Activated T-helper 1 cell treated with anti-CD3 and anti-CD28 coated beads, Interleukin-12 subunit alpha, Interleukin-12 subunit beta, Interleukin-2, Interleukin-4 antibody, amounts not matched to agents 30 ng/mL and 10 ng/mL and 1 ng/mL, durations not matched to agents 14 hours and 24 hours and 36 hours (primary cell): ENCODE measurements at regions of chr6 and their contacts with region 1.

Region 1: GRCh38 chr6:13427801-13428582 is 59.4 kb downstream of the GFOD1 start:
- DNase-seq: peak; percentile 57
- H3K4me3 Mint-ChIP-seq: peak overlapping the region; percentile 54
- H3K27ac Mint-ChIP-seq: peak overlapping the region; percentile 95
- H3K4me1 Mint-ChIP-seq: peaks cover 78% of the 10 kb centered on the region
- H3K27me3 Mint-ChIP-seq: no peaks in the 10 kb centered on the region

Region 2: DNA sequence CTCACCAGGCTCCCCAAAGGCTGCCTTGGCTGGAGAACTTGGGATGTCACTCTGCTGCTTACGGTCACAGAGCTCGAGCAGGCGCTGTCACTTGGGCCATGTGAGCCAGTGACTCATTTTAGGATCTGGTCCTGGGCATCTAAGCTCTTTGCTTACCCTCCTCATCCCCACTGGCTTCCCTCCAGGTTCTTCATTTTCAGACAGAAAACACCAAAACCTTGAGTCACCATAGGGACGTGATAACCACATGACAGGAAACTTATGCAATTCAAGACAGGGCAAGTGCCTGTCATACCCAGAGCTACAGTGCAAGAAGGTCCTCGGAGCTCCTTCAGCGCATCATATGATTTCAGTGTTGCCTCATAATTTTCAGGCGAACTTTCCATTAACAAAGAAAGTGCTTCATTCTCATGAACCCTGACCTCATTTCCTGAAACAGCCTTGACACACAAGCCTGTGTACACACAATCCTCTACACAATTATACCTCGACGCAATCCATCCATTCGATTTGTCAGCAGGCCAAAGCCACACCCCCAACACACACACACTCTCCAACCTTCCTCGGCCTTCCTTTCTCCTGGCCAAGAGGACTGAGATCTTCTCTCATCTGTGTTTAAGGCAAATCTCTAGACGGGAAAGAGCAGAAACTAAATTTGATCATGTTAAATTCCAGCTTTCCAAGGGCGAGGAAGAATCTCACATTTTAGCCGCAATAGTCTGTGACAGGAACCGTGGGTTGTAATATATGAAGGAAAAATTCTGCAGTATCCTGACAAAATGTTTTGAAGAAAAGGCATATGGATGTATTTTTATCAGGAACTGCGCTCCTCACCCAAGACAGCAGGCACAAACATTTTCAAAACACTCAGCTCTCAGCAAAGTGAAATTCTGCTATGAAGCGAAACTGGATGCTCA is 125.0 kb before region 1 on chr6:
- intact Hi-C with region 1: loop called (anchors 1 kb)
- DNase-seq: peak; percentile 65
- H3K4me3 Mint-ChIP-seq: peak overlapping the region; percentile 61
- H3K27ac Mint-ChIP-seq: peak overlapping the region; percentile 87
- H3K4me1 Mint-ChIP-seq: peaks cover 43% of the 10 kb centered on the region
- H3K27me3 Mint-ChIP-seq: no peaks in the 10 kb centered on the region

Region 3: DNA sequence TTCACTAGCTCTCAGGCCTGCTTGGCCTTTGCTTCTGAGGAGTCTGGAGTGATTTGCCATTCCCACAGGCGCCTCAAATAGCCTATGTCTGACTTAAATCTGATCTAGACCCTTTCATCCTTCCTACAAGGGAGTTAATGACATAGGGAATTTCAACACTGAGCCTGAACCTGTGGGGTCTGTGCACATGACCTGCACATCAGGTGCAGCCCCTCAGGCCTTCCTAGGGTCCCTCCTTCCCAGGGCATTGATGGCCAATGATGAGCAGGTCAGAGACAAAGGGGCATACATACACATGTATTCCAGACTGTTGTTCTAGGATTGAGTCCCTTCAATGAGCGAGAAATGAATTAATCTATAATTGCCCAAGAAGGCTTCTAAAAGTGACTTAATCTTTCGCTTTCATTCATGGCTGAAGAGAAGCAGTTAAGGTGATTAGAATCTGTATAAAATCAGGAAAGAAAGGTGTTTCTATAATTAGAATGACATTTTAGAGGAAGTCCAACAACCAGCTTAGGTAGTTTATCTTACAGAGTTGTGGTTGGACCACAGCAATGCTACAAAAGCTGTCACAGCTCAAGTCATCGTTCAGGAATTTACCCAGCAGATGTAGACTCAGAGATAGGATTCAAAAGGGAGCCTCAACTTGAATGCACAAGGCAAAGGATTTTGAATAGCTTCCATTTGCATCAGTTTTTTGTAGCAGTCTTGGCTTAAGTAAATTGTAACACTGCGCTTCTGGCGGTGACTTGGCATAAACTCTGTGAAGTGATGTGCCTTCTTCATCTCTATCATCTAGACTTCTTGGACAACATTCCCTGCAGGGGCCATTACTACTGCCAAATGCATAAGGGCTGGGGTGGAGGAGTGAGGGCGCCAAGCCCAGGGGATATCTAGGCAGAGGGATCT is 72.7 kb before region 1 on chr6:
- intact Hi-C with region 1: loop called (anchors 1 kb)
- DNase-seq: peak; percentile 36
- H3K4me3 Mint-ChIP-seq: peak overlapping the region; percentile 75
- H3K27ac Mint-ChIP-seq: peak overlapping the region; percentile 95
- H3K4me1 Mint-ChIP-seq: peaks cover 67% of the 10 kb centered on the region
- H3K27me3 Mint-ChIP-seq: no peaks in the 10 kb centered on the region

Region 4: DNA sequence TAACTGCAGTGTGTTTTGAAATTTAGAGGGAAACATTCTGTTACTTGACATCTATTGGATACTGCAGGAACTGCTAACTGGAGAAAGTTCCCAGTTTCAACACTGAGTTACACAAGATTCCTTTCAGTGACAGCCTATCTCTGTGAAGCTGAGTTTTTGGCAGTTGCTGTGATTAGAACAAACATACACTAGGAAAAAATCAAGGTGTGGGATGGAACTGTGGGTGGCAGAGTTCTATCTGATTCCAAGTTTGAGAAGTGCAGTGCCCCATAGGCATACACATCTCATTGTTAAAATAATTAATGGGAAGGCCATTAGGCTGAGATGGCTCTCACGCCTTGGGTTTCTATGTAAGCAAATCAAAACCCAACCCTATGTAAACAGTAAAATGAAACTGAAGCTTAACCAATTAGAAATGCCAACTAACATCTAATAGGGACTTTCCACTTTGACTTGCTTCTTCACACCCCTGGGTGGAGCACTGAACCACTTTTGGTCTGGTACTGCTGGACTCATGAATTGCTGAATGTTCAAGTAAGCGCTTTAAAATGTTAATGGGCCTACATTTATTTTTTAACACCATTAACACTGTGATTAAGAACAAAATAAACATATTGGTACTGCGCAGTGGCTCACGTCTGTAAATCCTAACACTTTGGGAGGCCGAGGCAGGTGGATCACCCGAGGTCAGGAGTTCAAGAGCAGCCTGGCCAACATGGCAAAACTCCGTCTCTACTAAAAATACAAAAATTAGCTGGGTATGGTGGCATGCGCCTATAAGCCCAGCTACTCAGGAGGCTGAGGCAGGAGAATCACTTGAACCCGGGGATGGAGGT is 44.4 kb before region 1 on chr6:
- intact Hi-C with region 1: loop called (anchors 2 kb)
- DNase-seq: peak; percentile 17
- H3K4me3 Mint-ChIP-seq: no peak overlapping the region
- H3K27ac Mint-ChIP-seq: peak overlapping the region; percentile 18
- H3K4me1 Mint-ChIP-seq: peaks cover 38% of the 10 kb centered on the region
- H3K27me3 Mint-ChIP-seq: no peaks in the 10 kb centered on the region

Region 5: DNA sequence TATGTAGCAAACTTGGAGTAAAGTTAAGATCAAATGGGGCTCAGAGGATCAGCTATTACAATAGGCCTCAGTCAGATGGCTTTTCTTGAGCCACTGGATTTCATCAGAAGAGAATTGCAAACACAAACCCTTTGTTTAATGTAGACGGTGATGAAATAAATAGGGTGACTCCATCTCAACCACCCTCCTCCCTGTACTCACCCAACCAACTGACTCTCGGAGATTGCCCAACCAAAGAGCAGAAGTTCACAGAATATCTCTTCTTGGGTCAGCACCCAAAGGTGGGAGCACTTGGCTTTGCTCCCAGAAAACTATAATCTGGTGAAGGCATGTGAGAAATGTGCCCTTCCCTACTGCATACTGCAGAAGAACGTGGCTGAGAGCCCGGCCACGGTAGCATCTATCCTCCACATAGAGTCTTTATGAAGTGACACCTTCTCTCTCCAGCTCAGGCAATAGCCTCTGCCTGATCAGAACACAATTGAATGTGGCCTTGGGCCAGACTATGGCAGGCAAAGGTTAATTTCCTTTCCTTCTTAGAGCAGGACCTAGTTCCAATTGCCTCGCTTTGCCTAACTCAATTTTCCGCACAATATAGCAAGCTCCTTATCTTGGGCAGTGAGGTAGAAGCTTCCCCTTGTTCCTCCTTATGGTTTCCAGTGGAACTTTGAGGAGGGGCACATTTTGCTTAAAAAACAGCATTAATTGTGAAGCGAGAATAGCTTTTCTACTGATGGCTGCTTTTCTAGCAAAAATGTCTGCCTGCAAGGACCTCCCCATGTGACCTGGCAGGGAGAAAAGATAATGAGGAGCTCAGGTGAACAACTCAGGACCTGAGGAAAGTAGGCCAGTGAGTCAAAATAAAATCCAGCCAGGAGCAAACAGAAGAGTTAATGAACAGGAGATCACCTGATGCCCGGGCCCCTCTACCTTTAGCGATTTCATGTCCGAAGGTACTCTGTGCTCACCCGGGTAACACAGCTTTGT is 20.0 kb before region 1 on chr6:
- intact Hi-C with region 1: no loop called
- DNase-seq: no peak
- H3K4me3 Mint-ChIP-seq: no peak overlapping the region
- H3K27ac Mint-ChIP-seq: no peak overlapping the region
- H3K4me1 Mint-ChIP-seq: no peaks in the 10 kb centered on the region
- H3K27me3 Mint-ChIP-seq: peaks cover 4% of the 10 kb centered on the region

Region 6: GRCh38 chr6:13445005-13445743 is 17.2 kb after region 1 on chr6:
- intact Hi-C with region 1: no loop called
- DNase-seq: no peak
- H3K4me3 Mint-ChIP-seq: no peak overlapping the region
- H3K27ac Mint-ChIP-seq: no peak overlapping the region
- H3K4me1 Mint-ChIP-seq: peaks cover 20% of the 10 kb centered on the region
- H3K27me3 Mint-ChIP-seq: no peaks in the 10 kb centered on the region

Region 7: DNA sequence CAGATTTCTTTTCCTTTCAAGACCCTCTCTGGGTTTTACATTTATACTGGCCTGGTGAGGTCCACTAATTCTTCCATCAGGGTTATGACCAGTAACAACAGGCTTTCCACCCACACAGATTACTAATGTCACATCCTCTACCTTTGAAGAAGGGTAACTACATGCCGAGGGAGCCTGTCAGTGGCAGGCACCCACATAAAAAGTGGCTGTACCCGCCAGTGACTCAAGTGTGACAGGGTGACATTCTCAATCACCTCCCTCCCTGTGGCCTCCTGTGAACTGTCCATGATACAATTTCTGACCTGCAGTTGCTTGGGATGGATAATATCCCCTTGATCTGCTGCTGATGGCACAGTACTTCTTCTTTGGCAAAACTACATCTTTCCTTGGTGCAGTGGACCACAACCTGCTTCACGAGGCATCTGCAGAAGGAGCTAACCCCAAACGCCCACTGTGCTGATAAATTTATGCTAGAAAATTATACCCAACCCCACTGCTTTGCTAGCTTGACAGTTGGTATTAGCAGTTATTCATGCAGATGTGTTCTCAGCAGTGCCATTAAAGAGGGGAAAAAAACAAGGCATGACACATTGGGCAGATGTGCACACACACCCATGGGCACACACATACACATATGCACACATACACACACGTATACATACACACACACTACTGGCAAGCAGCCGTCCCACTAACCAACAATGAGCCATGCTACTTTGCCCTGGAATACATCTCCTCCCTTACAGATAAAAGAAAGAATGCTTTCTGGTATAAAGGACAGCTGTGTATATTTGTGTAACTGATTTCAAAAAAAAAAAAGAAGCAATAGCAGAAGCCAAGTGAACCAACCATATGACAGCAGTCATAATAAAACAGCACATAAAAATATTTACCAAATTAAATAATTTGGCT is 38.6 kb after region 1 on chr6:
- intact Hi-C with region 1: loop called (anchors 1 kb)
- DNase-seq: no peak
- H3K4me3 Mint-ChIP-seq: no peak overlapping the region
- H3K27ac Mint-ChIP-seq: peak overlapping the region; percentile 85
- H3K4me1 Mint-ChIP-seq: peaks cover 46% of the 10 kb centered on the region
- H3K27me3 Mint-ChIP-seq: no peaks in the 10 kb centered on the region

Region 8: GRCh38 chr6:13614926-13615798 is 187.2 kb after region 1 on chr6 and contains the start of gene NOL7:
- intact Hi-C with region 1: loop called (anchors 1 kb)
- DNase-seq: peak; percentile 98
- H3K4me3 Mint-ChIP-seq: peak within 1 kb of the TSS; percentile 99
- H3K27ac Mint-ChIP-seq: peak within 1 kb of the TSS; percentile 87
- H3K4me1 Mint-ChIP-seq: peaks cover 54% of the 10 kb centered on the region
- H3K27me3 Mint-ChIP-seq: no peaks in the 10 kb centered on the region
- total RNA-seq, gene NOL7: 97.7 and 100 TPM in 2 replicates

Region 9: DNA sequence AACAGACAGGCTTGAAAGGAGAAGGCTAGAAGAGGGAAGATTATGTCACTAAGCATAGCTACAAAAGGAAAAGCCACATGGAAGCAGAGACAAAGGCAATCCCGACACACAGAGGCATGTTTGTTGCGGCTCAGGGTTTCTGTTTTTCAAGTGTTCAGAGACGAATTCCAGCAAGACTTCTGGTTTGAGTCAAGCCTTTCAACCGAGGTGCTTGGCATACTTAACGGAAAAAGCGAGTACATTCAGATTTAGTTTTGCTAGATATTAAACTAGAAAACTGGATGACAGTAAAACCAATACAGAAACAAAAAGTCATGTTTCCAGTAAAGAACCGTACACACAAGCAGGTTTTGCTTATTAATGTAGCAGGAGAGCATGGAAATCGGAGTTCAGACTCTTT is 359.1 kb after region 1 on chr6:
- intact Hi-C with region 1: loop called (anchors 5 kb)
- DNase-seq: no peak
- H3K4me3 Mint-ChIP-seq: peak overlapping the region; percentile 41
- H3K27ac Mint-ChIP-seq: peak overlapping the region; percentile 82
- H3K4me1 Mint-ChIP-seq: peaks cover 33% of the 10 kb centered on the region
- H3K27me3 Mint-ChIP-seq: no peaks in the 10 kb centered on the region